ENCODE measurements at regions of chr17 and their contacts with region 1.

Region 1: GRCh38 chr17:35969558-35970380 is 11.5 kb downstream of the CCL16 start:
- DNase-seq: peak; percentile 26 to 94 (median 83)

Region 2: GRCh38 chr17:35841505-35841904 is 128.3 kb before region 1 on chr17:
- intact Hi-C with region 1: no loop called
- DNase-seq: peak in 13 of 42 donors; percentile 5 to 49 (median 24)

Region 3: GRCh38 chr17:36034127-36034526 is 64.4 kb after region 1 on chr17:
- intact Hi-C with region 1: loop called (anchors 10 kb)
- DNase-seq: no peak

Region 4: GRCh38 chr17:36072431-36073121 is 102.8 kb after region 1 on chr17:
- intact Hi-C with region 1: no loop called
- DNase-seq: peak in 29 of 42 donors; percentile 4 to 79 (median 44)

Region 5: GRCh38 chr17:36486204-36487194 is 516.7 kb after region 1 on chr17 and contains the start of gene ZNHIT3:
- intact Hi-C with region 1: loop called (anchors 10 kb)
- DNase-seq: peak; percentile 88 to 97 (median 94)

Measured in head of caudate nucleus (tissue), 42 donors.